H1 (cell line): ENCODE measurements at regions of chr1 and their contacts with region 1.

Region 1: DNA sequence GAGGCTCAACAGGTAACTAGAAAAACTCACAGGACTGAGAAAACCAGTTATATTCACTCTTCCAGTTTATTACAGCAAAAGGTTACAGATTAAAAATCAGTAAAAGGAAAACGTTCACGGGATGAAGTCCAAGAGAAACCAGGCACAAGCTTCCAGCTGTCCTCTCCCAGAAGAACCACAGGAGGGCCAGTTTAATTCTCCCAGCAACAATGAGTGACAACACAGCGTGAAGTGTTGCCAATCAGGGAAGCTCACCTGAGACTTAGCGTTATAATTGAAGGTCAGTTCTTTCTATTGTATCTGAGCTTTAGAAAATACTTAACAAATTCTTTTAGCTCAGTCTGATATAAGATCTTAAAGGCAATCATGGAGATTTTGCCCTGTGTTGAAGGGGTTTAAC is 65.2 kb upstream of the TNR start:
- DNase-seq: no peak
- H3K4me3 ChIP-seq: no peak overlapping the region
- H3K27ac ChIP-seq: no peak overlapping the region
- H3K4me1 ChIP-seq: peaks cover 0 to 6% (median 3%) of the 10 kb centered on the region in 4 experiments; a peak in 5 of 7 replicates
- H3K27me3 ChIP-seq: peaks cover 0 to 2% (median 0%) of the 10 kb centered on the region in 4 experiments; a peak in 3 of 7 replicates
- CTCF ChIP-seq: no peak
- EP300 ChIP-seq: no peak
- POLR2A ChIP-seq: no peak
- RAD21 ChIP-seq: no peak

Region 2: GRCh38 chr1:175824079-175824478 is 15.5 kb after region 1 on chr1:
- CTCF ChIA-PET with region 1: interaction called, 16 read pairs
- POLR2A ChIA-PET with region 1: no interaction called
- DNase-seq: peak; percentile 50 to 90
- H3K4me3 ChIP-seq: no peak overlapping the region
- H3K27ac ChIP-seq: no peak overlapping the region
- H3K4me1 ChIP-seq: peaks cover 0 to 1% (median 0%) of the 10 kb centered on the region in 4 experiments; a peak in 1 of 7 replicates
- H3K27me3 ChIP-seq: no peaks in the 10 kb centered on the region
- CTCF ChIP-seq: peak; percentile 61 to 92 (median 83)
- EP300 ChIP-seq: no peak
- POLR2A ChIP-seq: no peak
- RAD21 ChIP-seq: peak; percentile 83 to 89

Region 3: GRCh38 chr1:175941164-175941563 is 132.6 kb after region 1 on chr1:
- CTCF ChIA-PET with region 1: no interaction called
- POLR2A ChIA-PET with region 1: no interaction called
- DNase-seq: no peak
- H3K4me3 ChIP-seq: no peak overlapping the region
- H3K27ac ChIP-seq: no peak overlapping the region
- H3K4me1 ChIP-seq: peaks cover 0 to 5% (median 2%) of the 10 kb centered on the region in 4 experiments; a peak in 2 of 7 replicates
- H3K27me3 ChIP-seq: no peaks in the 10 kb centered on the region
- CTCF ChIP-seq: no peak
- EP300 ChIP-seq: no peak
- POLR2A ChIP-seq: no peak
- RAD21 ChIP-seq: no peak